CD4-positive, alpha-beta T cell (primary cell): ENCODE measurements at regions of chr12 and their contacts with region 1.

Region 1: DNA sequence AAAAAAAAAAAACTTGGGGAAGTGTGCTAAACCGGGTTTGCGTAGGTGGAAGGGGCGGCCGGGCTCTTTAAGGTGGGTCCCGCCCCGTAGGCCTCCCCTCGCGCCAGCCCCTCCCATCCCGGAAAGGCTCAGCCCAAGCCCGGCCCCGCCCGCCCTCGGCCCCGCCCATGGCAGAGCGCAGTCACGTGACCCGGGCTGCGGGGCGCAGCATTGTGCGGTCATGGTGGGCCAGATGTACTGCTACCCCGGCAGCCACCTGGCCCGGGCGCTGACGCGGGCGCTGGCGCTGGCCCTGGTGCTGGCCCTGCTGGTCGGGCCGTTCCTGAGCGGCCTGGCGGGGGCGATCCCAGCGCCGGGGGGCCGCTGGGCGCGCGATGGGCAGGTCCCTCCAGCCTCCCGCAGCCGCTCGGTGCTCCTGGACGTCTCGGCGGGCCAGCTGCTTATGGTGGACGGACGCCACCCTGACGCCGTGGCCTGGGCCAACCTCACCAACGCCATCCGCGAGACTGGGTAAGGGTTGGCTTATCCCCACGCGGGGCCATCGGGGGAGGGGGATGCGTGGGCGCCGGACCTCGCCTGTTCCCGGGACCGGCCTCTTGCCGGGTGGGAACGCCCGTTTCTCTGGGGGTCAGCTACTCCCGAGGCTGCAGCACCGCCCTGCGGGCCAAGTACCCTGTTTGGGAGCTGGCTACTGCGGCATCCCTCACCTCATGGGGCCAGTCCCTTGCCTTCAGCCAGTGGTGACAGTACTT is at the start of gene PLBD2:
- DNase-seq: peak; percentile 91 to 98 (median 94)
- ATAC-seq: peak; percentile 92
- H3K4me3 ChIP-seq: peak within 1 kb of the TSS; percentile 85
- H3K4me3 Mint-ChIP-seq: peak within 1 kb of the TSS; percentile 93
- H3K27ac ChIP-seq: peak within 1 kb of the TSS; percentile 67 to 82
- H3K27ac Mint-ChIP-seq: peak within 1 kb of the TSS; percentile 95
- H3K4me1 ChIP-seq: peaks cover 22% of the 10 kb centered on the region
- H3K4me1 Mint-ChIP-seq: peaks cover 24% of the 10 kb centered on the region
- H3K27me3 ChIP-seq: no peaks in the 10 kb centered on the region
- H3K27me3 Mint-ChIP-seq: no peaks in the 10 kb centered on the region
- CTCF ChIP-seq: no peak
- total RNA-seq, gene PLBD2: 10.4 to 12.2 TPM

Region 2: GRCh38 chr12:111368788-111369495 is 1989.6 kb before region 1 on chr12 and contains the start of gene PHETA1:
- CTCF ChIA-PET with region 1: no interaction called
- POLR2A ChIA-PET with region 1: no interaction called
- intact Hi-C with region 1: loop called in 1 of 2 experiments (anchors 10 kb)
- DNase-seq: peak; percentile 49 to 85 (median 70)
- ATAC-seq: peak; percentile 87
- H3K4me3 ChIP-seq: peak within 1 kb of the TSS; percentile 71
- H3K4me3 Mint-ChIP-seq: peak within 1 kb of the TSS; percentile 92
- H3K27ac ChIP-seq: no peak within 1 kb of the TSS
- H3K27ac Mint-ChIP-seq: peak within 1 kb of the TSS; percentile 36
- H3K4me1 ChIP-seq: peaks cover 24% of the 10 kb centered on the region
- H3K4me1 Mint-ChIP-seq: peaks cover 21% of the 10 kb centered on the region
- H3K27me3 ChIP-seq: no peaks in the 10 kb centered on the region
- H3K27me3 Mint-ChIP-seq: no peaks in the 10 kb centered on the region
- CTCF ChIP-seq: no peak
- total RNA-seq, gene PHETA1: 1.3 to 1.7 TPM

Region 3: DNA sequence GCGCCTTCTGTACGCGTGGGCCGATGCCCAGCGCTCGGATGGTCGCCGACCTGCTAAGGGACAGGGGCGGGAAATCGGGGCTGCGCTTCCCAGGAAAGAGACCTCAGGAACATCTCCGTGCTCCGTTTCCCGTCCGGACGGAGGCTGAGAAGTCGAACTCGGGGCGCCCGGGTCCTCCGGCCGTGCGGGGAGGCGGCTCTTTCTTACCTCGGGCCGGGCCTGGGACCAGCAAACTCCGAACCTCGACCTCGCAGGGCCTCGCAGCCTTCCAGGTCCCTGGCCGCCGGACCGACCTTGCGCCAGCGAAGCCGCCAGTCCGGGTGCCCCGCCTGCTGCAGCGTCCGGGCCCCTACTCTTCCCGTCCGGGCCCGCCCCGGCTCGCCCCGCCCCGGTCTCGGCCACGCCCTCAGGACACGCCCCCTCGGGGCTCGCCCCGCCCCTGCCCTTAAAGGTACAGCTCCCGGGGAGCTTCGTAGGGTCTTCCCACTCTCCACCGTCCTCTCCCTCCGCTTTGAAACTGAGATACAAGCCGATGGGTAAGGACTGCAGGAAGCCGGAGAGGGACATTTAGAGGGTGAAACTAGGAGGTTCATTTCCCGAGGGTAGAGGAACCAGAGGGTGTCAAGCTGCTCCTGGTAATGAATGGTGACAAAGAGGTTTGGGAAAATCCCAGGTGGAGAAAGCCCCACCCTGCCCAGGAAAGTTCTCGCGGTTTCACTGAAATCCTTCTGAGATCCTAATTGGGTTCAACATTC is 23.6 kb before region 1 on chr12 and contains the start of gene SLC8B1:
- CTCF ChIA-PET with region 1: no interaction called
- POLR2A ChIA-PET with region 1: interaction called, 7 read pairs
- intact Hi-C with region 1: loop called (anchors 1 kb)
- DNase-seq: peak; percentile 69 to 95 (median 86)
- ATAC-seq: peak; percentile 97
- H3K4me3 ChIP-seq: peak within 1 kb of the TSS; percentile 94
- H3K4me3 Mint-ChIP-seq: peak within 1 kb of the TSS; percentile 99
- H3K27ac ChIP-seq: peak within 1 kb of the TSS in 1 of 2 donors; percentile 25
- H3K27ac Mint-ChIP-seq: peak within 1 kb of the TSS; percentile 87
- H3K4me1 ChIP-seq: peaks cover 33% of the 10 kb centered on the region
- H3K4me1 Mint-ChIP-seq: peaks cover 45% of the 10 kb centered on the region
- H3K27me3 ChIP-seq: no peaks in the 10 kb centered on the region
- H3K27me3 Mint-ChIP-seq: no peaks in the 10 kb centered on the region
- CTCF ChIP-seq: no peak
- total RNA-seq, gene SLC8B1: 85.3 to 92.7 TPM